Activated CD4-positive, alpha-beta memory T cell treated with anti-CD3 and anti-CD28 coated beads for 36 hours (primary cell): ENCODE measurements at regions of chr17 and their contacts with region 1.

Region 1: DNA sequence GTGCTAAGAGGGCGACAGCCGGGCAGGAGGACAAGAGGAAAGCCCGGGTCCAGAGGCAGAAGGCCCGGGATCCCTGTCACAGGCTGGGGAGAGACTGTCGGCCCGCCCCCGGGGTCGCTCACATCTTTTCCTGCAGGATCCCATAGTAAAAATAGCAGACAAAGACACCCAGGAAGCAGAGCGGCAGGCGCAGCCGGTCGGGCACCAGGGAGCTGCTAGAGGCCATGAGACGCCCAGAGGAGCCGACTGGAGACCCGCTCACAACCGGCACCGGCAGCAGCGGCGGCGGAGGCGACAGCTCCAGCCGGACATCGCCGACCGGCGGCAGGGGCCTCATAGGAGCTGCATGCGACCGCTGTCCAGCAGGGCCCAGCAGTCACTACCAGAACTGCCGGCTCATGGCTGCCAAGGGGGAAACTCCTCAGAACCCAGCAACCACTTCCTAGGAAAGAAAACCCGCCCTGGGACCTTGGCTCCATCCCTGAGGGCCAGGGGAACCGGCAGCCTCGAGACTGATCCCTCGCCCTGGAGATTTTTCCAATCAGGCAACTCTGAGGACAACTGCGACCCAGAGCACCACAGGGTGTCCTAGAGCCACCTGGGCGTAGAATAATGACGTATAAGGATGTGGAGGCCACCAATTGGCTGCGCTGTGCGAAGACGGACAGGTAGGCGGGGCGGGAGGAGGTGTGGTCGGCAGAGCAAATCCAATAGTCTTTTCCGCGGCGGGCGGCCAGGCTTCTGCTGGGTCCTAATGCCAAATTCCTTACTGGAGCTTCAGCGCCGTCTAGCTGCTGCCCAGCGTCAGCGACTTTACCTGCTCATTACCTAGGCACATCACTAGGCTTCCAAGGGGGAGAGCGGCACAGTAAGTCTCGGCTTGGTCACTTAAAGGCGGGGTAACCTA is at the start of gene SLC35B1:
- DNase-seq: peak; percentile 99
- H3K4me3 Mint-ChIP-seq: peak within 1 kb of the TSS; percentile 91
- H3K27ac Mint-ChIP-seq: peak within 1 kb of the TSS; percentile 98
- H3K4me1 Mint-ChIP-seq: peaks cover 42% of the 10 kb centered on the region
- H3K27me3 Mint-ChIP-seq: no peaks in the 10 kb centered on the region
- total RNA-seq, gene SLC35B1: 48.3 to 54.1 TPM

Region 2: DNA sequence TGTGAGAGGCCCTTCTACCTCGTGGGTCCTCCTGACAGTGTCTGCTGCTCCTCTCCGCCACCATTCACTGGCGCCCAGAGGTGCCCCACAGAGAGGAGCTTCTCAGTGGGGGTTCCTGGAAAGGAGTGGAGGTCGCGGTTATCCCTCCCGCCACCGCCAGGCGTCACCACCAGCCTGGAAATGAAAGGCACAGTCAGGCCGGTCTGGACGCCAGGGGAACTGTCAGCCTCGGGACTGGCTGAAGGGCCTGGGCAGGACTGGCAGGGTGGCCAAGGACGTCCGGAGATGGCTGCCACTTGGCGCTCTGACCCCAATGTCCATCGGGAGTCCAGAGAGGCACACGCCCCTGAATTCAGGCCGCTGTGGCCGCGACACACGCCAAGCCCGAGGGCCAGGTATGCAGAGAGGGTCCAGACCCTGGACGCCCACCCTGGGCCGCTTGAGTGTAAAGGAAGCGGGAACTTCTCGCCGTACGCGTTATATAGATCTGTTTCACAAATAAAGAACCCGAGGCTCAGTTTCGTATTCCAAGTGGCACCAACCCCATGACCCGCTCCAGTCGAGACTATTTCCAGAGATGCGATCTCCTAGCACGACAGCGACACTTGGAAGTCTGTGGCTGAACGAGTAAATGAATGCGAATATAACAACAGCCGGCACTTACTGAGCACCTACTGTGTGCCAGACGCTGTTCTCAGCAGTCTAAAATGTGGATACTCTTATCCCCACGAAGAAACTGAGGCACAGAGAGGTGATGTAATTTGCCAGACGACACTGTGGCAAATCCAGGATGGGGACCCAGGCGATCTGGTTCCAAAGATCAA is 139.8 kb before region 1 on chr17:
- CTCF ChIA-PET with region 1: interaction called, 564 read pairs
- POLR2A ChIA-PET with region 1: no interaction called
- intact Hi-C with region 1: loop called (anchors 1 kb)
- DNase-seq: peak; percentile 90
- H3K4me3 Mint-ChIP-seq: peak overlapping the region; percentile 67
- H3K27ac Mint-ChIP-seq: no peak overlapping the region
- H3K4me1 Mint-ChIP-seq: peaks cover 16% of the 10 kb centered on the region
- H3K27me3 Mint-ChIP-seq: peaks cover 14% of the 10 kb centered on the region

Region 3: DNA sequence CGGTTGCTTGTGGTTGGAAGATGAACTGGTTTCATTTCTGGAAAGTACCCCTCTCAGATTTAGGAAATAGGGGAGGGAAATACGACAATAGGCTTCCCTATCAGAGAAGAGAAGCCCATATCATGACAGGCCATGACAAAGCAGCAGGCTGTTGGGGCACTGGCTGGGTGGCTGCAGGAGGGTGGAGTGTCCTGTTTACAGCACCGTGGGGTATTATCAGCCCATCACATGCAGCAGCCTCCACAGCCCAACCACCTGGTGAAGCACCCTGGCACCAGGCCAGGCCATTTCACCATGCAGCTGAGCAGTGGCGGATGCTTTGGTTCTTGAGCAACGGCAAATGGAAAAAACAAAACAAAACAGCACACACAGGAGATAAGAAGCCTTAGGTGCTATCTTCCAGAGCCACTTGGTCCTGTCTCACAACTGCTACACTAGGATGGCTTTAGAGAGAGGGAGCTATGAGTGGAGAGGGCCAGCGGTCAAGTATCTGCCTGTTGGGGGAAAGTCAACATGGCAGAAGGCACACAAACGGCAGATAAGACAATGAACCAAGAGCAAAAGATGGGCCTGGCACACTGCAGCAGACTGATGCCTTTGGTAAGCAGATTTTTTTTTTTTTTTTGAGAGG is 31.9 kb after region 1 on chr17:
- CTCF ChIA-PET with region 1: interaction called, 11 read pairs
- POLR2A ChIA-PET with region 1: interaction called, 20 read pairs
- intact Hi-C with region 1: loop called (anchors 2 kb)
- DNase-seq: peak; percentile 92
- H3K4me3 Mint-ChIP-seq: peak overlapping the region; percentile 85
- H3K27ac Mint-ChIP-seq: peak overlapping the region; percentile 100
- H3K4me1 Mint-ChIP-seq: peaks cover 74% of the 10 kb centered on the region
- H3K27me3 Mint-ChIP-seq: no peaks in the 10 kb centered on the region

Region 4: GRCh38 chr17:49748791-49749190 is 40.9 kb after region 1 on chr17:
- CTCF ChIA-PET with region 1: interaction called, 10 read pairs
- POLR2A ChIA-PET with region 1: interaction called, 13 read pairs
- intact Hi-C with region 1: loop called (anchors 2 kb)
- DNase-seq: peak; percentile 80
- H3K4me3 Mint-ChIP-seq: peak overlapping the region; percentile 33
- H3K27ac Mint-ChIP-seq: peak overlapping the region; percentile 94
- H3K4me1 Mint-ChIP-seq: peaks cover 81% of the 10 kb centered on the region
- H3K27me3 Mint-ChIP-seq: no peaks in the 10 kb centered on the region

Region 5: DNA sequence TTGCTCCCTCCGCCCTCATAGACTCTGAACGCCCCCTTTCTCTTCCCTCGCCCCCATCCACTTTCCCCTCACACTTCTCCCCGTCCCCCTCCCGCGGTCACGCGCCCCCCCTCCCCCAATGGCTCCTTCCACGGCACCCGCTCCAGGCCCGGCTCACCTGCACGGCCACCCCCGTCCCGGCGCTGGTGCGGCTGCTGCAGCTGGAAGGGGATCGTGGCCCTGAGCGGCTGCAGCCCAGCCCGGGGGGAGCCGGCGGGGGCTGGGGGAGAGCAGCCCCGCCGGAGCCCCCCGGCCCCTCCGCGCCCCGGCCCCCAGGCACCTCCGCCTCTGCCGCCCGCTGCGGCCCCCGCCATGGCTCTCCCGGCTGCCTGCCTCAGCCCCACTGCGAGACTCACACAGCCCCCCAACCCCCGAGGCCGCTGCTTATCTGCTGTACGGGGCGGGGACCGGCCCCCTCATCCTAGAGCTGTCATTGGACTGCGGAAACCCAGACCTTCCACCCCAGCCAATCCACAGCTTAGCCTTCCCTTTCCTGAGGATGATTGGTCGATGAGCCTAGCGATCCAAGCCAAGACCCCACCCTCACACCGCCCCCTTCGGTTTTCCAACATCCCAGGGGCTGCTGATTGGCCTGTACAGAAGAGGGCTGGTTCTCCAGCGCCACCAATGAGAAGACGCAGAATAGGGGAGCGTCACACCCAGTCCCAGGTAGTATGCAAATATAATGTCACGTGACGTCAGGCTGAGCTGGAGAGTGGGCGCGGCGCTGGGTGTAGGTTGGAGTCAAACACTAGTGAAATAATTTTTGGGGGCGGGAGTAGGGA is 56.1 kb after region 1 on chr17 and contains the start of gene FAM117A:
- CTCF ChIA-PET with region 1: interaction called, 47 read pairs
- POLR2A ChIA-PET with region 1: interaction called, 20 read pairs
- intact Hi-C with region 1: loop called (anchors 1 kb)
- DNase-seq: peak; percentile 99
- H3K4me3 Mint-ChIP-seq: peak within 1 kb of the TSS; percentile 90
- H3K27ac Mint-ChIP-seq: peak within 1 kb of the TSS; percentile 81
- H3K4me1 Mint-ChIP-seq: peaks cover 54% of the 10 kb centered on the region
- H3K27me3 Mint-ChIP-seq: no peaks in the 10 kb centered on the region
- total RNA-seq, gene FAM117A: 20.9 to 21.6 TPM

Region 6: GRCh38 chr17:49851387-49852291 is 143.8 kb after region 1 on chr17:
- CTCF ChIA-PET with region 1: interaction called, 4 read pairs
- POLR2A ChIA-PET with region 1: interaction called, 3 read pairs
- intact Hi-C with region 1: loop called (anchors 1 kb)
- DNase-seq: peak; percentile 76
- H3K4me3 Mint-ChIP-seq: peak overlapping the region; percentile 76
- H3K27ac Mint-ChIP-seq: peak overlapping the region; percentile 73
- H3K4me1 Mint-ChIP-seq: peaks cover 9% of the 10 kb centered on the region
- H3K27me3 Mint-ChIP-seq: no peaks in the 10 kb centered on the region